ENCODE measurements at regions of chr1 and their contacts with region 1.

Region 1: DNA sequence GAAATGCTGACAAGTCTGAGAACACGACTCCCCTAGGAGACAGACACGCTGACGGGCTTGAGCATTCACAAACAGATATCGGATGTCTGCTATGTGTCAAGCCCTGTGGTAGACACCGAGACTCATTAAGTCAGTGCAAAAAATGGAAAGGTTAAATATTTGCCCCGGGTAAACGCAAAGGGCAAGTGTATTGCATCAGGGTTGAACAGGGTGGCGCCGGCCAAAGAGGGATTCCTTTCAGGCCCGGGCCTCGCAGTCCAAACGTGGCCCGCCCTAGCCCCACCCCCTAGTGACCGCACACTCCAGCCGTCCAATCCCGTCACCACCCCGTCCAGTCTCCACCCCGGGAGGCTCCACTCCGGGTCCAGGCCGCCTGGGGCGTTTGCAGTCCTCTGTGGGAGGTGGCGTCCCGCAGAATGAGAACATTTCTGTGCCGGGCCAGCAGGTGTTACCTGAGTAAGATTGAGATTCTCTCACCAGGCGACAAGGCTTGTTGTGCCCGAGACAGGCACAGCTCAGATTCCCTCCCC is 16.3 kb upstream of the TMEM9 start:
- DNase-seq: peak; percentile 96 to 98
- ATAC-seq: peak; percentile 100
- H3K4me3 ChIP-seq: peak overlapping the region; percentile 48 to 56
- H3K27ac ChIP-seq: peak overlapping the region in 1 of 2 donors; percentile 54
- H3K4me1 ChIP-seq: no peaks in the 10 kb centered on the region
- H3K27me3 ChIP-seq: no peaks in the 10 kb centered on the region

Region 2: DNA sequence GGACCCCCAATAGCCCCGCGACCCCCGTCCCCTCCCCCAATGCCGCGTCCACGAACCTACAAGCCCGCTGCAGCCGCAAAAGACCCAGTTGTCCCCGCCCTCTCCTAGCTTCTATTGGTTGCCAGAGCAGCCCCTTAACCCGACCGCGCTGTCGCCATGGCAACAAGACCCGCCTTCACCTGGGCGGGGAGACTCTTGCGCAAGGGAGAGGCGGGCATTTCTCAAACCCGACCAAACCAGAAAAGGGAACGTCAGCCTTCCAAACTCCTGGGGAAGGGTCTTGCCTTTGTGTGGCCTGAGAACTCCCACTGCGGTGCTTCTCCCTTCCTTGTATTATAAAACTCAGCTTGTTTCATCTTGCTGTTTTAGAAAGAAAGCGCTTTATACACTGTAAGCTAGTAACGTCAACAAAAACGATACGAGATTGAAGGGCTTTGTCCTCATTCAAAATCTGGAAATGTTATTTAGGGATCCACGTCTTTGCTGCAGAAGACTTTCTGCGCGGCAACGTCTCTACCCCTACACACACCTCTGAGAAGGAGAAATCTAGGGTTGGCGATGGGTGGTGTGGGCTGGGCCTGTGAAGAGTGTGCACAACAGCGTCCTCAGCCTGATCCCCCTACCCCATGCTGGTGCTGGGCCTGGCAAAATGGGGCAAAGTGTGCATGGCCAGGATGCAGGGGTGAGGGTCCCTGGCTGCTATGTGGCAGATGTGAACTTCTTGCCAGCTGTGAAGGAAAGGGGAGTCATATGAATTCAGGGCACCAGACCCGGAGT is 16.0 kb before region 1 on chr1 and contains the start of gene TMEM9:
- intact Hi-C with region 1: loop called in 1 of 2 experiments (anchors 2 kb)
- DNase-seq: peak; percentile 98 to 99
- ATAC-seq: peak; percentile 98
- H3K4me3 ChIP-seq: peak within 1 kb of the TSS; percentile 57 to 97
- H3K27ac ChIP-seq: no peak within 1 kb of the TSS
- H3K4me1 ChIP-seq: no peaks in the 10 kb centered on the region
- H3K27me3 ChIP-seq: no peaks in the 10 kb centered on the region
- total RNA-seq, gene TMEM9: 36.3 to 47.4 TPM

Measured in aorta (tissue), 5 donors.